AG04450 (cell line): ENCODE measurements at regions of chr10 and their contacts with region 1.

Region 1: DNA sequence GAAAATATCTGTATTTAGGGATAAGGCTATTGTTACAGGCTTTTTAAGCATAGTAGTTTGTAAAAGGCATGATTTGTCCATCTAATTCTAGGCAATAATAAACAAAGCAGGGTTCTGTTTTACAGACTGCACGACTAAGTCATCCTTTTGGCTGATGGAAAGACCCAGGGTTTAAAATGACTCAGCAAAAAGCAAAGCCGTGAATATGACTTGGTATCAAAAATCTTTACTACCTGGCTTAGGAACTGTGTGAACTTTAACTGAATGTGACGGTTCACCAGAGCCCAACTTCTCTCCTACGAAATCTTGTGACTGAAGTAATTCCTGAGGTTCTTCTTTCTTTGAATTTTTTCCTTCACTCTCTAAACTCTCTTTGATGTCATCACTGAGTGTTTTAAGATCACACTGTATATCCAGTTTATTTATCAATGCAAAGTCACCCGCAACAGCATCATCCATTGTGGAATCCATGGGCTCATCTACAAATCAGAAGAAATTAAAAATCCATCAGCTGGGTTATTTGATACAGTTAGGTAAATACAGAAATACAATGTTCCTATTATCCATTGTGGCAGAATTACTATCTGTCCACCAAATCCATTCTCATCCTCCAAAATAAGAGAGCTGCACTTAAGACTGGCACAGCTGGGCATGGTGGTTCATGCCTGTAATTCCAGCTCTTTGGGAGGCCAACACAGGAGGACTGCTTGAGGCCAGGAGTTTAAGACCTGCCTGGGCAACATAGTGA is 17.0 kb downstream of the ATE1 start:
- DNase-seq: peak; percentile 54
- H3K4me3 ChIP-seq: no peak overlapping the region
- H3K27ac ChIP-seq: peak overlapping the region; percentile 77
- H3K27me3 ChIP-seq: no peaks in the 10 kb centered on the region
- CTCF ChIP-seq: no peak

Region 2: DNA sequence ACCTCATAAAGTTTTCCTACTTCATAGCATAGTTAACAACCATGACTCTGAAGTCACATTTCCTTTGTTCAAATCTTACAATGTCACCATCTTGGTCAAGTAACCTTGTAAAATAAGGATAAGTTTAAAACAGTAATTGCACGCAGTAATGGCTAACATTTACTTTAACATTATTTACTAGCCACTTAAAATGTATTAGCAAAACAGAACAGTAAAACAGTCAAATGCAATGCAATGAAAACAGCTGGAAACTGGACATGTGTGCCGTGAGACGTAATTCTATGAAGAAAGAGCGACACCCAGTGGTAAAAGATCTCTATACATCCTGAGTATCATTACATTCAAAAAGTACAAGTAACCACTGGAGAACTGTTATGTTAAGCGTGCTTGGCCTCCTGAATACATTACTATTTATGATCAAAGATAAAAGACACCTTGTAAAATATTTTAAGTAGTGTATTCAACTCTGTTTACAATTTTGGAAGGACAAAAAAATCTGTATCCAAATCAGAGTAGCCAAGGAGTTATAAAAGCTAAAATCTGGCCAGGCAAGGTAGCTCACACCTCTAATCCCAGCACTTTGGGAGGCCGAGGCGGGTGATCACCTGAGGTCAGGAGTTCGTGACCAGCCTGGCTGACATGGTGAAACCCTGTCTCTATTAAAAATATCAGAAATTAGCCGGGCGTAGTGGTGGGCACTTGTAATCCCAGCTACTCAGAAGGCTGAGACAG is 10.2 kb before region 1 on chr10:
- CTCF ChIA-PET with region 1: interaction called, 13 read pairs
- POLR2A ChIA-PET with region 1: no interaction called
- DNase-seq: peak; percentile 42
- H3K4me3 ChIP-seq: no peak overlapping the region
- H3K27ac ChIP-seq: no peak overlapping the region
- H3K27me3 ChIP-seq: no peaks in the 10 kb centered on the region
- CTCF ChIP-seq: peak; percentile 66